ENCODE measurements at regions of chr6 and their contacts with region 1.

Region 1: GRCh38 chr6:99868074-99868702 is 125.8 kb downstream of the MCHR2 start:
- DNase-seq: peak; percentile 67
- H3K4me3 ChIP-seq: no peak overlapping the region
- H3K27ac ChIP-seq: no peak overlapping the region
- H3K4me1 ChIP-seq: no peaks in the 10 kb centered on the region
- H3K27me3 ChIP-seq: peaks cover 1 to 14% of the 10 kb centered on the region in 2 experiments
- CTCF ChIP-seq: peak; percentile 77 to 91
- POLR2A ChIP-seq: no peak

Region 2: DNA sequence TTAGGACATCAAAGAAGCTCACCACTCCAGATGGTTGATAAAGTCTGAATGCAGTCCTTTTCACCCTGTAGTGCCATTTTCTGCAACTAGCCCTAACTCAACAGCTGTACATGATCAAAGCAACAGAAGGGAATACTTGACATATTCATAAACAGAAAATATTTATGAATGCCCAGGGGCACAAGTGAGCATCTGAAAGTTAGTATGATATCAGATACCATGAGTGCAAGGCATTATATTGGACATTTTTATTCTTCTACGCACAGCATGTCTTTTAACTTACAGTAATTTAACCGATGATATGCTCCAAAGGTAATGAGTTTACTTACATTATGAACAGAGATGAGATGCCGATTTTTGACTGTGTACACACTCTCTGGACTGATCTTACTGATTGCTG is 16.2 kb before region 1 on chr6:
- CTCF ChIA-PET with region 1: interaction called, 22 read pairs
- POLR2A ChIA-PET with region 1: no interaction called
- dilution Hi-C with region 1: no loop called
- intact Hi-C with region 1: no loop called
- DNase-seq: no peak
- H3K4me3 ChIP-seq: no peak overlapping the region
- H3K27ac ChIP-seq: no peak overlapping the region
- H3K4me1 ChIP-seq: no peaks in the 10 kb centered on the region
- H3K27me3 ChIP-seq: no peaks in the 10 kb centered on the region
- CTCF ChIP-seq: no peak
- POLR2A ChIP-seq: no peak

Region 3: GRCh38 chr6:99894815-99895214 is 26.6 kb after region 1 on chr6:
- CTCF ChIA-PET with region 1: interaction called, 13 read pairs
- POLR2A ChIA-PET with region 1: no interaction called
- dilution Hi-C with region 1: no loop called
- intact Hi-C with region 1: no loop called
- DNase-seq: no peak
- H3K4me3 ChIP-seq: no peak overlapping the region
- H3K27ac ChIP-seq: no peak overlapping the region
- H3K4me1 ChIP-seq: no peaks in the 10 kb centered on the region
- H3K27me3 ChIP-seq: no peaks in the 10 kb centered on the region
- CTCF ChIP-seq: no peak
- POLR2A ChIP-seq: no peak

Region 4: GRCh38 chr6:100001915-100002388 is 133.8 kb after region 1 on chr6:
- CTCF ChIA-PET with region 1: interaction called, 8 read pairs
- POLR2A ChIA-PET with region 1: no interaction called
- dilution Hi-C with region 1: no loop called
- intact Hi-C with region 1: loop called (anchors 5 kb)
- DNase-seq: peak; percentile 45
- H3K4me3 ChIP-seq: no peak overlapping the region
- H3K27ac ChIP-seq: no peak overlapping the region
- H3K4me1 ChIP-seq: no peaks in the 10 kb centered on the region
- H3K27me3 ChIP-seq: peaks cover 7 to 32% of the 10 kb centered on the region in 2 experiments
- CTCF ChIP-seq: peak; percentile 89
- POLR2A ChIP-seq: no peak

Region 5: GRCh38 chr6:100105138-100105753 is 237.1 kb after region 1 on chr6:
- CTCF ChIA-PET with region 1: interaction called, 172 read pairs
- POLR2A ChIA-PET with region 1: no interaction called
- dilution Hi-C with region 1: no loop called
- intact Hi-C with region 1: no loop called
- DNase-seq: no peak
- H3K4me3 ChIP-seq: no peak overlapping the region
- H3K27ac ChIP-seq: no peak overlapping the region
- H3K4me1 ChIP-seq: no peaks in the 10 kb centered on the region
- H3K27me3 ChIP-seq: peaks cover 11 to 25% of the 10 kb centered on the region in 2 experiments
- CTCF ChIP-seq: no peak
- POLR2A ChIP-seq: no peak

Region 6: GRCh38 chr6:100664274-100665040 is 796.3 kb after region 1 on chr6:
- CTCF ChIA-PET with region 1: interaction called, 13 read pairs
- POLR2A ChIA-PET with region 1: no interaction called
- dilution Hi-C with region 1: no loop called
- intact Hi-C with region 1: loop called (anchors 5 kb)
- DNase-seq: peak; percentile 40
- H3K4me3 ChIP-seq: no peak overlapping the region
- H3K27ac ChIP-seq: no peak overlapping the region
- H3K4me1 ChIP-seq: peaks cover 4% of the 10 kb centered on the region
- H3K27me3 ChIP-seq: no peaks in the 10 kb centered on the region
- CTCF ChIP-seq: peak; percentile 26 to 32
- POLR2A ChIP-seq: no peak

Measured in endothelial cell of umbilical vein (primary cell).